Activated T-helper 1 cell treated with anti-CD3 and anti-CD28 coated beads, Interleukin-12 subunit alpha, Interleukin-12 subunit beta, Interleukin-2, Interleukin-4 antibody, amounts not matched to agents 30 ng/mL and 10 ng/mL and 1 ng/mL, durations not matched to agents 14 hours and 24 hours and 36 hours (primary cell): ENCODE measurements at regions of chr12 and their contacts with region 1.

Region 1: DNA sequence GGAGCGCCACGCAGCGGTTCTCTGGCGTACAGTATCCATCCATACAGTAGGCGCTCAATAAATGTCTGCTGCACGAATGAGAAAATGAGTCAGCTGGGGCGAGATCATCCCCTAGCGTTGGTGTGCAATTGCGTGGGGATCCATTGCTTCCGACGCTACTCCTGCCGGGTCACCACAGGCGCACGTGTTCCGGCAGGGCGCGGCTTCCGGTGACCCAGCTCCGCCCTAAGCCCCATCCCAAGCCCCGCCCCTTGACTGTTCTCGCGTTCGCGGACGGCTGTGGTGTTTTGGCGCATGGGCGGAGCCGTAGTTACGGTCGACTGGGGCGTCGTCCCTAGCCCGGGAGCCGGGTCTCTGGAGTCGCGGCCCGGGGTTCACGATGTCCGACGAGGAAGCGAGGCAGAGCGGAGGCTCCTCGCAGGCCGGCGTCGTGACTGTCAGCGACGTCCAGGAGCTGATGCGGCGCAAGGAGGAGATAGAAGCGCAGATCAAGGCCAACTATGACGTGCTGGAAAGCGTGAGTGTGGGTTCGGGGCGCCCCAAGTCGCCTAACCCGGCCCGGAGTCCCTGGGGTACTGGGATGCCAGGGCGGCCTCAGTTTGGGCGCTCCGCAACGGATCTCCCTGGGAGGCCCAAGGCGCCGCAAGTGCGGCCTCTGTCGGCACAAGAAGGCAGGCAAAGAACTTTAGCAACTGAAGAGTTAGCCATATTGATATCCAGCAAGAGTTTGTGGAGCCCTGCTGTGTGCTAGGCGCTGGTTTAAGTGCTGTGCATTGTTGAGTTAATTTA is at the start of gene PSMD9:
- DNase-seq: peak; percentile 98
- H3K4me3 Mint-ChIP-seq: peak within 1 kb of the TSS; percentile 99
- H3K27ac Mint-ChIP-seq: peak within 1 kb of the TSS; percentile 99
- H3K4me1 Mint-ChIP-seq: peaks cover 35% of the 10 kb centered on the region
- H3K27me3 Mint-ChIP-seq: peaks cover 2% of the 10 kb centered on the region
- total RNA-seq, gene PSMD9: 63.9 and 67.5 TPM in 2 replicates

Region 2: DNA sequence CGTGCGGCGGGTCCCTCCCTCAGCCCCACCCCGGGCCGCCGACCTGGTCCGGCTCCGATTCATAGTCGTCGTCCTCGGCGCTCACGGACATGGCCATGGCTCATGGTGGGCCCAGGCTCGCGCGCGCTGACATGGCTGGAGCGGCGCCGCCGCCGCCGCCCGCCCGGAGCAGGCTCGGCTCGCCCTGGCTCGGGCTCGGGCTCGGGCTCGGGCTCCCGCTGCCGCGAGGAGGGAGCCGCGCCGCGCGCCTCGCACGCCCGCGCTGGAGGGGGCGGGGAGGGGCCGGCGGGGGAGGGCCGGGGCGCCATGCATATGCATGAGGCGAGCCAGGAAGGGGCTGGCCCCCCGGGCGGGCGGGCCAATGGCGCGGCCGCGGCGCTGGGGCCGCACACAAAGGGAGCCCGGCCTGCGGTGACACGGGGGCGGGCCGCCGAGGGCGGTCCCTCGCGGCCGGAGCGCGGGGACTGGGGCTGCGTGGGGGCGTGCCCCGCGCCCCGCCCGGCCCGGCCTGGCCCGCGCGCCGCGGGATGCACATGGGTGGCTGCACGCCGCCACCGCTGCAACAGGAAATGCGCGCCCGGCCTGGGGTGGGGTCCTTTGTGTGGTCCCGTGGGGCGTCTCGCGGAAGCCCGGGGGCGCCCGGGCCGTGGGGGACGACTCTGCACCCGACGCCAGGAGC is 421.4 kb before region 1 on chr12:
- intact Hi-C with region 1: loop called (anchors 2 kb)
- DNase-seq: peak; percentile 88
- H3K4me3 Mint-ChIP-seq: no peak overlapping the region
- H3K27ac Mint-ChIP-seq: no peak overlapping the region
- H3K4me1 Mint-ChIP-seq: peaks cover 29% of the 10 kb centered on the region
- H3K27me3 Mint-ChIP-seq: peaks cover 8% of the 10 kb centered on the region

Region 3: GRCh38 chr12:121697098-121697698 is 191.5 kb before region 1 on chr12:
- intact Hi-C with region 1: loop called (anchors 1 kb)
- DNase-seq: peak; percentile 24
- H3K4me3 Mint-ChIP-seq: no peak overlapping the region
- H3K27ac Mint-ChIP-seq: no peak overlapping the region
- H3K4me1 Mint-ChIP-seq: no peaks in the 10 kb centered on the region
- H3K27me3 Mint-ChIP-seq: peaks cover 10% of the 10 kb centered on the region

Region 4: DNA sequence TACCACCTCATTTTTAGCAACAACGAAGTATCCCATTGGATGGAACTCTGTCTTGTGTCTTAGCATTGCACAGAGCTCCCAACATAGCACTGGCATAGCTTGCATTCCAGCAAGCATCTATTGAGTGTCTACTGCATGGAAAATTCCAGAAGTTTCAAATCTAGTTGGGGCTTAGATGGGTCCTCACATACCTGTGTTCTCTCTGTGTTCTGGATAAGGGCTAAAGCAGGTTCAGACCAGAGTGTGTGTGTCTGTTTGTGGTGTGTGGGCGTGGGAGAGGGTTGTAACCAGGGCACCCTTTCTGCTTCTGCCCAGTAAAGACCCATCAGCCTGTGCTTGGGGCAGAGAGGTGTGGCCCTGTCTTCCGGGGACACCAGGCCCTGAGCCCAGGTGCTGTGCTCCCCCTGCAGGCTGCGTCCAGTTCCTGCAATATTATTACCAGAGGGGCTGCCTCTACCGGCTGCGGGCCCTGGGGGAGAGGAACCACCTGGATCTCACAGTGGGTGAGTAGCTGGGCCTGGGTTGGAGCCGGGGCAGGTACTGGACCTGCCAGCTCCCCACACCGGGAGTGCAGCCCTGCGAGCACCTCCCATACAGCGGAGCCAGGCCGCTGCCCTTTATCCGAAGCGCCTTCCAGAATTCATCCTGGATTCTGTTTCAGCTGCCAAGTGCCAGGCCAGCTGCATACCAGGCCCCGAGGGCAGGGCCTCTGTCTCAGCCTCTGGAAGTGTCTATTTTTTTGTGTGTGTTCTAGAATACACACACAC is 115.5 kb before region 1 on chr12:
- intact Hi-C with region 1: loop called (anchors 1 kb)
- DNase-seq: peak; percentile 71
- H3K4me3 Mint-ChIP-seq: no peak overlapping the region
- H3K27ac Mint-ChIP-seq: no peak overlapping the region
- H3K4me1 Mint-ChIP-seq: peaks cover 7% of the 10 kb centered on the region
- H3K27me3 Mint-ChIP-seq: no peaks in the 10 kb centered on the region

Region 5: DNA sequence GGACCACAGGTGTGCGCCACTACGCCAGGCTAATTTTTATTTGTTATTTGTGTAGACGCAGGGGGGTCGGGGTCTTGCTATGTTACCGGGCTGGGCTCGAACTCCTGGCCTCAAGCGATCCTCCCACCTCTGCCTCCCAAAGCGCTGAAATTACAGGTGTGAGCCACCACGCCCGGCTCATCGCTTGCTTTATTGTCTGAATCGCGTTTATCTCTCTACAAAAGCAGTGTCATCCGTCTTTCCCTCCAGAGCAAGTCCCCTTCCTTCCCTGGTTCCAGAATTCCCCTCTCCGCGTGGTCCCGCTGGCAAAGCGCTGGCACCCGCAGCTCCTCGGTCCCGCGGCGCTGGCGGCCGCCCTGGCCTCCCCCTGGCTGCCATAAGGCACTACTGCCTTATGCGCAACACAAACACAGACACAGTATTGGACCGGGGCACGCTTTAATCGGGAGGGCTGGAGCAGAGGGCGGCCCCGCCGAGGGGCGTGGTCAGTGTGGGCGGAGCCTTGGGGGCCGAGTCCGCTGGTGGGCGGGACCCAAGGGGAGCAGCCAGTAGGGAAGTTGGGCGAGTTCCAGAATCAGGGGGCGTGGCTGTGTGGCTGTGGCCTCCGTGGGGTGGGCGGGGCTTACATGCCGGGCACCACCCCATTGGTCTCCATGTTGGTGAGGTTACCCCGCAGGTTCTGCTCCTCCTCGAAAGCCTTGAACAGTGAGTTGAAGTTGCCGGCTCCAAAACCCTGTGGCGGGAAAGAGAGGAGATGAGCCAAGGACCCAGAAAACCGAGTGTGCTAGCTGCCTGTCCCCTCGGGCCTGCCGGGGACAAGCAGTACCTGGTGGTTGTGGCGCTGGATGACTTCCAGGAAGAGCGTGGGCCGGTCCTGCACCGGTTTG is 49.3 kb before region 1 on chr12:
- intact Hi-C with region 1: loop called (anchors 1 kb)
- DNase-seq: peak; percentile 99
- H3K4me3 Mint-ChIP-seq: peak overlapping the region; percentile 95
- H3K27ac Mint-ChIP-seq: peak overlapping the region; percentile 79
- H3K4me1 Mint-ChIP-seq: peaks cover 16% of the 10 kb centered on the region
- H3K27me3 Mint-ChIP-seq: peaks cover 4% of the 10 kb centered on the region